ENCODE measurements at regions of chr3 and their contacts with region 1.

Region 1: GRCh38 chr3:24494618-24495325 is at the start of gene THRB:
- DNase-seq: peak; percentile 77
- ATAC-seq: peak; percentile 48
- H3K4me3 Mint-ChIP-seq: peak within 1 kb of the TSS; percentile 91
- H3K27ac Mint-ChIP-seq: peak within 1 kb of the TSS; percentile 83; the same call in 1 of the 2 replicates
- H3K4me1 Mint-ChIP-seq: peaks cover 60% of the 10 kb centered on the region
- H3K27me3 Mint-ChIP-seq: peaks cover 50% of the 10 kb centered on the region
- CTCF ChIP-seq: no peak
- total RNA-seq, gene THRB: 4.5 to 5.8 TPM (median 4.8 TPM) in 3 replicates

Region 2: DNA sequence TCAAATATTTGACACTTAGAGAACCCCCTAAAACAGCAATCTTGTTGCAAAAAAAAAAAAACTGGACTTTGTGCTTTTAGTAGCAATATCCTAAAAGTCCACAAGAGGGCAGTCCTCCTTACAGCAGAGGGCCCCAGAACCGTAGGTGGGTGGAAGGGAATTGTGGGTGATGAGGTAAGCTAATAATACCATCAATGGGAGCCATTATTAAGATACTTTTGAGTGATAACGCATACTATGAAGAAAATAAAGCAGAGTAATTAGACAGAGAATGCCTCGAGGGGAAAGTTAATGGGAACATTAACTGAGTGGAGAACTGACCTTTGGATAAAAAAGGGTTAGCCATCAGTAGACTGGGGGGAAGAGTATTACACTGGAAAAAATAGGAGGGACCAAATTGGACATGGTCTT is 230.0 kb before region 1 on chr3:
- CTCF ChIA-PET with region 1: interaction called, 11 read pairs
- POLR2A ChIA-PET with region 1: no interaction called
- DNase-seq: no peak
- ATAC-seq: peak; percentile 73
- H3K4me3 Mint-ChIP-seq: no peak overlapping the region
- H3K27ac Mint-ChIP-seq: no peak overlapping the region
- H3K4me1 Mint-ChIP-seq: no peaks in the 10 kb centered on the region
- H3K27me3 Mint-ChIP-seq: no peaks in the 10 kb centered on the region; the same call in 1 of the 2 replicates
- CTCF ChIP-seq: peak; percentile 62

Region 3: DNA sequence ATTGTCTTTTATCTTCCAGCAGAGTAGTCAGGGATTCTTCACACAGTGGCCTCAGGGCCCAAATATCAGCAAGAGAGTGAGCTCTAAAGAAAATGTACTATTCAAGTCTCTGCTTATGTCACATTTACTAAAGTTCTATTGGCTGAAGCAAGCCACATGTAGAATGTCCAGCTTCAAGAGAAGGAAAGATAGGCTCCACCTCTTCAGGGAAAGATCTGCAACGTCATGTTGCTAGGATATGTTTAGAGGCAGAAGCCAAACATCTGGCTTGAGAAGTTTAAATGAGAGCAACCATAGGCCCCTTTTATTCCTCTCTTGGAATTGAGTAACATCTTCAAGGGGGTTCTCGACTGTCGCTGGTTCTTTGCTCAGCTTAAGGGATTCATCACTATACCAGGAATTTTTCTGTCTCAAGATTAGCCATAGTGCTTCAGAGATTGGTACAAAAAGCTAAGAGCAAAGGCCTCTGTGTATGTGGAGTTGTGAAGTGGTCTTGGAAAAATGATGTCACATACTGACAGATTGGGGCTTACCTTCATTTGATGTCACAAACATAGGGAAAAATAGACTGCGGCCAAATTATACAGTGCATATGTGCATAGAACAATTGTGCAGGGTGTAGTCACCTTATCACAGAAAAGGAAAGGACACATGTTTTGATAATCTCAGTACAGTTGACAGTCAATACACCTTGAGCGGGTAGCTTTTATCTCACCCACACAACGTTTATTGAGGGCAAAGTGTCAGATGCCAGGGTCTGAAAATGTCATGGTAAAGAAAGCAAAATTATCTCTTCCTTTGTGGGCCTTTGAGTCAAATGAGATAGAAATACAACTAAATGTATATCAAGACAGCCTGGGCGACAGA is 11.1 kb after region 1 on chr3:
- CTCF ChIA-PET with region 1: interaction called, 11 read pairs
- POLR2A ChIA-PET with region 1: no interaction called
- DNase-seq: no peak
- ATAC-seq: no peak
- H3K4me3 Mint-ChIP-seq: no peak overlapping the region
- H3K27ac Mint-ChIP-seq: no peak overlapping the region
- H3K4me1 Mint-ChIP-seq: peaks cover 12% of the 10 kb centered on the region
- H3K27me3 Mint-ChIP-seq: no peaks in the 10 kb centered on the region
- CTCF ChIP-seq: no peak

Region 4: DNA sequence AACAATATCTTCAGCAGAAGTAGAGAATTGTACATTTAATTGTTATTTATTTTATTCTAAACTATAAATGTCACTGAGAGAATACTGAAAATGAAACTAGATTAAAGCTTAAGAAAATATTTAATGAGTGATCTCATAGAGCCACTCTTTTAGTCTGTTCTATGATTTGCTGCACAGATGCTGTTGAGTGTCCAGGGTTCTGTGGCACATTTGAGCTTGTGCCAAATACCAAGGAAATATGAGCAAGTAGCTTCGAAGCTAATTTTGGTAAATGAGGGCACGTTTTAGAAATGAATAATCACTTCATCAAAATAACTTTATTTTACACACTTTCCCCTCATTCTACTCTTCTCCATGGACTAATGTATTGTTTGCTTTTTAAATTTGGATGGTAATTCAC is 53.5 kb after region 1 on chr3:
- CTCF ChIA-PET with region 1: no interaction called
- POLR2A ChIA-PET with region 1: no interaction called
- DNase-seq: no peak
- ATAC-seq: no peak
- H3K4me3 Mint-ChIP-seq: no peak overlapping the region
- H3K27ac Mint-ChIP-seq: no peak overlapping the region
- H3K4me1 Mint-ChIP-seq: no peaks in the 10 kb centered on the region
- H3K27me3 Mint-ChIP-seq: no peaks in the 10 kb centered on the region
- CTCF ChIP-seq: no peak

Region 5: DNA sequence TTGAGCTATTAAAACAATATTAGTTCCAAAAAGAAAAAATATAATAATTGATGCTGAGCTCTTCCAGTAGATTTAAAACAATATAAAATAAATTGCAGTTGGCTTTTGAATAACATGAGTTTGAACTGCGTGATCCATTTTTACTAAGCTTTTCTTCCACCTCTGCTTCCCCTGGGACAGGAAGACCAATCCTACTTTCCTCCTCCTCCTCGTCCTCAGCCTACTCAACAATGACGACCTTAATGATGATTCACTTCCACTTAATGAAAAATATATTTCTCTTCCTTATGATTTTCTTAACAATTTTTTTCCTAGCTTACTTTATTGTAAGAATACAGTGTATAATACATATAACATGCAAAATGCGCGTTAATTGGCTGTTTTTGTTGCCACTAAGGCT is 78.8 kb after region 1 on chr3:
- CTCF ChIA-PET with region 1: no interaction called
- POLR2A ChIA-PET with region 1: no interaction called
- DNase-seq: no peak
- ATAC-seq: no peak
- H3K4me3 Mint-ChIP-seq: no peak overlapping the region
- H3K27ac Mint-ChIP-seq: no peak overlapping the region
- H3K4me1 Mint-ChIP-seq: peaks cover under 1% of the 10 kb centered on the region
- H3K27me3 Mint-ChIP-seq: no peaks in the 10 kb centered on the region
- CTCF ChIP-seq: no peak